PC-3 (cell line): ENCODE measurements at regions of chr5 and their contacts with region 1.

Region 1: GRCh38 chr5:169632946-169633345 is 4.1 kb upstream of the DOCK2 start:
- DNase-seq: peak; percentile 7
- ATAC-seq: peak; percentile 48
- H3K4me3 ChIP-seq: no peak overlapping the region
- H3K27ac ChIP-seq: peak overlapping the region; percentile 38
- H3K4me1 ChIP-seq: peaks cover 35% of the 10 kb centered on the region
- H3K27me3 ChIP-seq: no peaks in the 10 kb centered on the region
- CTCF ChIP-seq: no peak

Region 2: GRCh38 chr5:169583424-169584204 is 49.3 kb before region 1 on chr5 and contains the start of gene SPDL1:
- CTCF ChIA-PET with region 1: no interaction called
- POLR2A ChIA-PET with region 1: no interaction called
- intact Hi-C with region 1: loop called (anchors 2 kb)
- DNase-seq: peak; percentile 97
- ATAC-seq: peak; percentile 92
- H3K4me3 ChIP-seq: peak within 1 kb of the TSS; percentile 88
- H3K27ac ChIP-seq: peak within 1 kb of the TSS; percentile 66
- H3K4me1 ChIP-seq: peaks cover 17% of the 10 kb centered on the region
- H3K27me3 ChIP-seq: no peaks in the 10 kb centered on the region
- CTCF ChIP-seq: no peak
- total RNA-seq, gene SPDL1: 29.9 and 38.8 TPM in 2 replicates

Region 3: GRCh38 chr5:169591636-169592035 is 41.3 kb before region 1 on chr5:
- CTCF ChIA-PET with region 1: no interaction called
- POLR2A ChIA-PET with region 1: no interaction called
- intact Hi-C with region 1: loop called (anchors 2 kb)
- DNase-seq: peak; percentile 60
- ATAC-seq: peak; percentile 48
- H3K4me3 ChIP-seq: no peak overlapping the region
- H3K27ac ChIP-seq: peak overlapping the region; percentile 93
- H3K4me1 ChIP-seq: peaks cover 47% of the 10 kb centered on the region
- H3K27me3 ChIP-seq: no peaks in the 10 kb centered on the region
- CTCF ChIP-seq: no peak

Region 4: DNA sequence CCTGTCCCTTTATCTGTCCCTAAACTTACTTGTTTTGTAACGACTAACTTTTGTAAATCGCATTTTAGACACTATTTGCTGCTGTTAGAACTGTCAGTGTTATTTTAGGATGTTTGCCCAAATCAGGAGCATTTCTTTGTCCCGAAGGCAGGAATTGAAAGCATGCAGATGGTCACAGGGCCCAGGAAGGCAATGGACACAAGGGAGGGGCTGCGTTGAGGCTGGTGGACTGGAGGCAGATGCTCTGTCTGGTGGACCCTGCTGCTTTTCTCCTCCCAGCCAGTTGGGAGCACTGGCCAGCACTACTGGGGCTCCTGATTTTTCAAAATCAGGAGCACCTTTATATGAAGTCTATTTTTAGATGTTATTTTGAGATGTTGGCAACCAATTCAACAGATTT is 35.8 kb after region 1 on chr5:
- CTCF ChIA-PET with region 1: no interaction called
- POLR2A ChIA-PET with region 1: no interaction called
- intact Hi-C with region 1: loop called (anchors 1 kb)
- DNase-seq: peak; percentile 33
- ATAC-seq: peak; percentile 77
- H3K4me3 ChIP-seq: peak overlapping the region; percentile 7; the same call in 1 of the 2 replicates
- H3K27ac ChIP-seq: peak overlapping the region; percentile 45
- H3K4me1 ChIP-seq: peaks cover 15% of the 10 kb centered on the region
- H3K27me3 ChIP-seq: no peaks in the 10 kb centered on the region
- CTCF ChIP-seq: peak; percentile 28; the same call in 1 of the 2 replicates

Region 5: DNA sequence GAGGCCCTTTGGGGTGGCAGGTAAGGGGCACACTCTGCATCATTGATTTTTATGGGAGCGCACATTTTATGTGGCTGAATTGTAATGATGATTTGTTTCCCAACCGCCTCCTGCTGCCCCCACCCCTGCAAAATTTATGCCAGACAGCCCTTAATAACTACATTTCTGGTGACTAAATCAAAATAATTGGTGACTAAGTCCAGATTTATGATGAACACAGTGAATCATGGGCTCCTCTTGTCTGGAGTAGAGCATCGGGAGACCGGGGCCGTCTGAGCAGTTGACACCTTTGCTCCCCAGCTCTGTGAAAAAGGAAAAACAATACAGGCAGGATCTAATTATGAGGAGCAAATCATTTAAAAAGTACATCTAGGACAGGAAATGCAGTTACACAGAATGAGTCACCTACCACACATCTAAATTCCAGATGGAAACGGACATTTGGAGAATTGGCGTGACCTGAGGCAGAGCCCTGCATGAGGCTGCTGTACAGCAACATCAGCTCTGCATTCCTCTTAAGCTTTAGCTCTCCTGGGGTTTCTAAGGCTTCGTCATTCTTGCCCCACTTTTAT is 63.1 kb after region 1 on chr5:
- CTCF ChIA-PET with region 1: no interaction called
- POLR2A ChIA-PET with region 1: no interaction called
- intact Hi-C with region 1: loop called (anchors 1 kb)
- DNase-seq: peak; percentile 96
- ATAC-seq: peak; percentile 87
- H3K4me3 ChIP-seq: peak overlapping the region; percentile 32; the same call in 1 of the 2 replicates
- H3K27ac ChIP-seq: peak overlapping the region; percentile 82
- H3K4me1 ChIP-seq: peaks cover 28% of the 10 kb centered on the region
- H3K27me3 ChIP-seq: no peaks in the 10 kb centered on the region
- CTCF ChIP-seq: no peak

Region 6: GRCh38 chr5:170010269-170010994 is 377.5 kb after region 1 on chr5:
- CTCF ChIA-PET with region 1: no interaction called
- POLR2A ChIA-PET with region 1: no interaction called
- intact Hi-C with region 1: no loop called
- DNase-seq: no peak
- ATAC-seq: no peak
- H3K4me3 ChIP-seq: no peak overlapping the region
- H3K27ac ChIP-seq: no peak overlapping the region
- H3K4me1 ChIP-seq: no peaks in the 10 kb centered on the region
- H3K27me3 ChIP-seq: no peaks in the 10 kb centered on the region
- CTCF ChIP-seq: no peak